Sigmoid colon (tissue), 7 donors: ENCODE measurements at regions of chr3 and their contacts with region 1.

Region 1: DNA sequence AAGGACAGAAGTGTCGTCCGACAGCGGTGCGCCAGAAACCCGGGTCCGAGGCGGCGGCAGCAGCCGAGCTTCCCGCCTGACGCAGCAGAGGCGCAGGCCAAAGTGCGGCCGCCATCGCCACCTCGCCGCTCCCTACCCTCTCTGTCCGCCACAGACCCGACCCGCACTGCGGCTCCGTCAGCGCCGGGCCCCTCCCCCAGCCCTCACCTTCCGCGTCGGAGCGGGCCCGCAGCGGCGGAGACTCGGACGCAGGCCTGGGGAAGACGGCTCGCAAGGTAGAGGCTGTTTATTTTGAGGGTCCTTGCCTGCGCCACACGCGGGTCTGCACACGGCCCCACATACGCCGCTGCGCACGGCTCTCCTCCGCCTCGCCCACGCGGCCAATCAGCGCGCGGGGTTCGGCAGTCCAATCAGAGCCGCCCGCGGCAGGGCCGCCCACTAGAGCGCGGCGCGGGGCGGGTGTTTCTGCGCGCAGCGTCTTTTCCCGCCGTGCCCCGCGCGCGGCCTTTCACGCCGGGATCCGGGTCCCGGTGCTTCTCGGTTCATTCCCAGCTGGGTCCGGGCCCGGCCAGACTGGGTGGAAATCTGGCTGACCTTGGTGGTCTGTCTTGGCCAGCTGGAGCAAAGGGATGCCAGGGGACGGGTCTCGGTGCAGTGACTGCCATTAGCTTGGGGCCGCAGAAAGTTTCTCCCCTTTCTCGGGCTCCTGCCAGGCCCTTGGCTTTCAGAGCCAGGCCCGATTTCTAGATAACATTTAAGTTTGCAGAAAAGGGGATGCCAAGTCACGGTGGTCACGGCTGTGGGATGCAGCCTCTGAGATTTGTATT is at the start of gene CNBP:
- DNase-seq: peak; percentile 96
- H3K4me3 ChIP-seq: peak within 1 kb of the TSS; percentile 82 to 97 (median 92)
- H3K27ac ChIP-seq: peak within 1 kb of the TSS; percentile 99
- H3K4me1 ChIP-seq: peaks cover 0 to 58% (median 46%) of the 10 kb centered on the region in 4 donors
- H3K27me3 ChIP-seq: no peaks in the 10 kb centered on the region
- CTCF ChIP-seq: no peak
- EP300 ChIP-seq: peak in 1 of 4 donors; percentile 9
- POLR2A ChIP-seq: peak; percentile 97
- total RNA-seq, gene CNBP: 398 to 687 (median 623) TPM

Region 2: GRCh38 chr3:129132097-129132866 is 51.5 kb before region 1 on chr3:
- intact Hi-C with region 1: no loop called
- DNase-seq: no peak
- H3K4me3 ChIP-seq: no peak overlapping the region
- H3K27ac ChIP-seq: no peak overlapping the region
- H3K4me1 ChIP-seq: no peaks in the 10 kb centered on the region
- H3K27me3 ChIP-seq: no peaks in the 10 kb centered on the region
- CTCF ChIP-seq: no peak
- EP300 ChIP-seq: no peak
- POLR2A ChIP-seq: no peak

Region 3: GRCh38 chr3:129160891-129161859 is 22.6 kb before region 1 on chr3 and contains the start of gene ISY1:
- intact Hi-C with region 1: loop called (anchors 1 kb)
- DNase-seq: peak; percentile 94
- H3K4me3 ChIP-seq: peak within 1 kb of the TSS; percentile 78 to 86 (median 82)
- H3K27ac ChIP-seq: peak within 1 kb of the TSS; percentile 92 to 94 (median 94)
- H3K4me1 ChIP-seq: peaks cover 0 to 29% (median 23%) of the 10 kb centered on the region in 4 donors
- H3K27me3 ChIP-seq: no peaks in the 10 kb centered on the region
- CTCF ChIP-seq: peak; percentile 44 to 78 (median 53)
- EP300 ChIP-seq: peak in 1 of 4 donors; percentile 16
- POLR2A ChIP-seq: peak; percentile 80 to 83
- total RNA-seq, gene ISY1: 18.0 to 26.0 (median 22.5) TPM

Region 4: GRCh38 chr3:129224984-129225393 is 41.2 kb after region 1 on chr3:
- intact Hi-C with region 1: loop called (anchors 5 kb)
- DNase-seq: peak; percentile 91
- H3K4me3 ChIP-seq: peak overlapping the region in 3 of 4 donors; percentile 4 to 24 (median 6)
- H3K27ac ChIP-seq: peak overlapping the region; percentile 77 to 92 (median 80)
- H3K4me1 ChIP-seq: peaks cover 0 to 45% (median 43%) of the 10 kb centered on the region in 4 donors
- H3K27me3 ChIP-seq: no peaks in the 10 kb centered on the region
- CTCF ChIP-seq: peak in 1 of 4 experiments; percentile 21
- EP300 ChIP-seq: no peak
- POLR2A ChIP-seq: no peak

Region 5: DNA sequence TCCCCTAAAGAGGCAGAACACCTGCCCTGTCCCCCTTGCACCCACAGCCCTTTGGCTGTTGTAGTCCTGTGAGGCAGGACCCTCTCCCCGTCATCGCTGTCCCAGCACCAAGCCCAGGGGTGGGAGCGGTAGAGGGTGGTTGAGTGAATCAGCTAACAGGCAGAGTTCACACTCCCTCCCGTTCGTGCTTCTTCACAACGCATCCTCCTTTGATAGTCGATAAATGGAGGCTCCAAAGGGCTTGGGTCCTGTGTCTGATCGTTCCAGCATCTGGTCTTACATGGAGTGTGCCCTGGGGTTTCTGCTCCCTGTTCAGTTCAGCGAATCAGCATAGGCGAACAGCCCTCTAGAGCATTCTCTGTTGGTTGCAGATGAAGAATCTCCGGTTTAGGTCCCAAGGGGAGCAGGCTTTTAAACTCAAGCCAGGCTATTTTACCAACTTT is 94.1 kb after region 1 on chr3:
- intact Hi-C with region 1: no loop called
- DNase-seq: no peak
- H3K4me3 ChIP-seq: peak overlapping the region in 3 of 4 donors; percentile 80 to 96 (median 95)
- H3K27ac ChIP-seq: peak overlapping the region; percentile 93 to 97 (median 94)
- H3K4me1 ChIP-seq: peaks cover 0 to 22% (median 19%) of the 10 kb centered on the region in 4 donors
- H3K27me3 ChIP-seq: no peaks in the 10 kb centered on the region
- CTCF ChIP-seq: no peak
- EP300 ChIP-seq: no peak
- POLR2A ChIP-seq: no peak